ENCODE measurements at regions of chr12 and their contacts with region 1.

Region 1: DNA sequence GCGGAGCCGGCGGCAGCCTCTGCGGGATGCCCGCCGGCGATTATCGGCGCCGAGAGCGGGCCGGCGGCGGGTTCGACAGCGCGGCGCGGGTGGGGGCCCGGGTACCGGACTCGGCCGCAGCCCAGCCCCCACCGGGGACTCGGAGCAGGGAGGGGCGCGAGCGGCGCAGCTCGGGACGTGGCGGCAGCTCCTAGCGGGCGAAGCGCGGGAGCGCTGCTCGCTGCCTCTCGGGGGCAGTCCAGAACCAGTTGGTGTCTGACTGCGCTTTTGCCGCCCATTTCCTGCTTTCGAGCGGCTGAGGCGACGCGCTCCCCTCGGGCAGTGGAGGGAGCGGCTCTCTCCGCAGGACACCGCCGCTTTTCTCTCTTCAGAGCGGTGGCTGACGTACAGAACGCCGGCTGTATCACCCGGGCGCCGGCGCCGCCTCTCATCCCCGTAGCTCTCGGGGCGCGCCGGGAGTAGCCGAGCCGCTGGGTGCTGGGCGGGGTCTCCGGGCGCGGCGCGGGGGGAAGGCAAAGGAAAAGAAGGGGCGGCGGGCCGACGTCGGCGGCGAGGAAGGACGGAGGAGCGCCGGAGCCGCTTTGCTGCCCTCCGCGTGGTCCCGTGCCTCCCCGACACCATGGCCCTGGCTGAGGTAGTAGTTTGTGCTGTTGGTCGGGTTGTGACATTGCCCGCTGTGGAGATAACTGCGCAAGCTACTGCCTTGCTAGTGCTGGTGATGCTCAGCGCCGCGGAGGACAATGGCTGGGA is 136.6 kb downstream of the MON2 start:
- DNase-seq: peak; percentile 97

Region 2: DNA sequence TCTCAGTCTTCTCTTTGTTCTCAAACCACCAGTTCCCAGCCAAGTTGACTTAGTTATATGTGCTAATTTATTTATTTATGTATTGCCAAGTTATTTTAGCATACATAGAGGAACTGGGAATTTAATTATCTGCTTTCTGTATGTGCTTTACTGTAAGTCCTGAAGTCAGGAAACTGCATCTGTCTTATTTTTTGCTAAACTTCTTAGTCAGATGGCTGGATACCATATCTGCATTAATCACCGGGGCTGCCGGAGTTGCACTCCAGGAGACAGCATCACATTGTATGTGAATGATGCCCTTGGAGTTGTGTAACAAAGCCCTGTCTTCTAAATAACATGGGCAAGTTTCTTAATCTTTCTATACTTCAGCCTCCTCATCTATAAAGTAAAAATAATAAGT is 40.4 kb before region 1 on chr12:
- intact Hi-C with region 1: no loop called
- DNase-seq: no peak

Region 3: DNA sequence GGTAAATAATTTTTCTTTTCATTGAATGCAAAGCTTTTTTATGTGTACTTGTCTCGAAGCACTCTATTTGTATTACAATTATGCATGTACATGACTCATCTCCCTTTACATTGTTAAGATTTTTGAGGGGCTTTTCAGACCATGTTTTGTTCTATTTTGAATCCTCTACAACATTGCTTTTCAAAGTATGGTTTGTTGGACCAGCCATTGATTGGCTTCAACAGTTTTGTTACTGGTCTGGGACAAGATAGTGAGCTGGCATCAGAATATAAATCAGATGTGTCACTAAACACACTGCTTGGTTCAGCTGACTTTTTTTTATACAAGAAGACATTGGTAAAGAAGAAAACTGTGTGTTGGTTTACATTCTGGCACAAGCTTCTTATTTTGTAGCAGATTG is 14.3 kb before region 1 on chr12:
- intact Hi-C with region 1: no loop called
- DNase-seq: no peak

Region 4: DNA sequence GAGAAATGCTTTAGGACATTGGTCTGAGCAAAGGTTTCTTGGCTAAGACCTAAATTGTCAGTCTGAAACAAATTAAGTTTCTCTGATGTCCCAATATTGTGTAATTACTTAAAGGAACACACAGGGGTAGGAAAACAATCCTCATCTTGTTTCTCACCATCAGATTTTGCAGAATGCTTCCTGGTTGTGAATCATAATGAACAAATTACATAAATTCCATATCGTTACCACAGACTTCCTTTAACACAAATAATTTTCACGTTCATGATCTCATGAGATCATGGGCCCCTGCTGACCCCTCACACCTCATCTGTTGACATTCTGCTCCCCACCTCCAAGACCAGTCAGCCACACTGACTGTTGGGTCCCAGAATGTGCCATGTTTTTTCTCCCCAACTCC is 57.5 kb after region 1 on chr12:
- intact Hi-C with region 1: no loop called
- DNase-seq: no peak

Region 5: DNA sequence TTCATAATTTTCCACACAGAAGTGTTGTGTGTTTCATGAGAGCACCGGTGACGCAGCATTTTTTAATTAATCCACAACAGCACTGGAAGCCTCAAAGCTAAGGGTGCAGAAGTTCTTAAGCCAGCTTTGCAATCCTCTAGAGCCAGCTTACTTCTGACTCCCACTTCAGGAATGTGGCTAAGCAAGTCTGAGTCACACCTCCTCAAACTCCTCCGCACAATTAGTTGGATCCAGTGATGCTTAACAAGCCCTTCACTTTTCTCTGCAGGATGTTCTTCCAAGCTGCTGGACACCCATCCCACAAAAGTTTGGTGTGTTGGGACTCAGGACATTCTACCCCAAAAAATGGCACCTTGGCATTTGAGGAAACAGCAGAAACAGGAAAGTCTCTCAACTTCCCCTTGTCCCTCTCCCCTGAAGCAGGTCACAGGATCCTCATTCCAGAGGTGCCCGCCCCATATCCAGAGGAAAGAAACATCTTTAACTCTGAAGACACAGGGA is 121.8 kb after region 1 on chr12:
- intact Hi-C with region 1: loop called in 1 of 2 experiments (anchors 10 kb)
- DNase-seq: no peak

Region 6: GRCh38 chr12:62793256-62794217 is 190.3 kb after region 1 on chr12:
- intact Hi-C with region 1: loop called in 1 of 2 experiments (anchors 5 kb)
- DNase-seq: peak; percentile 96